ENCODE measurements at regions of chr3 and their contacts with region 1.

Region 1: GRCh38 chr3:190811775-190812480 is 50.6 kb downstream of the GMNC start:
- DNase-seq: peak in 1 of 5 donors; percentile 33
- ATAC-seq: no peak
- H3K4me3 ChIP-seq: no peak overlapping the region
- H3K27ac ChIP-seq: no peak overlapping the region
- H3K4me1 ChIP-seq: peaks cover 0 to 18% (median 1%) of the 10 kb centered on the region in 12 donors
- H3K27me3 ChIP-seq: no peaks in the 10 kb centered on the region
- CTCF ChIP-seq: peak; percentile 24 to 66 (median 50)
- POLR2A ChIP-seq: no peak

Region 2: GRCh38 chr3:190617185-190617584 is 194.7 kb before region 1 on chr3:
- intact Hi-C with region 1: no loop called
- DNase-seq: peak in 2 of 5 donors; percentile 19 to 38
- ATAC-seq: peak in 3 of 4 donors; percentile 39 to 68 (median 42)
- H3K4me3 ChIP-seq: no peak overlapping the region
- H3K27ac ChIP-seq: peak overlapping the region in 1 of 12 donors; percentile 53
- H3K4me1 ChIP-seq: peaks cover 0 to 45% (median 0%) of the 10 kb centered on the region in 12 donors
- H3K27me3 ChIP-seq: no peaks in the 10 kb centered on the region
- CTCF ChIP-seq: no peak
- POLR2A ChIP-seq: no peak

Region 3: GRCh38 chr3:190666821-190667220 is 145.1 kb before region 1 on chr3:
- intact Hi-C with region 1: no loop called
- DNase-seq: no peak
- ATAC-seq: no peak
- H3K4me3 ChIP-seq: no peak overlapping the region
- H3K27ac ChIP-seq: no peak overlapping the region
- H3K4me1 ChIP-seq: no peaks in the 10 kb centered on the region
- H3K27me3 ChIP-seq: no peaks in the 10 kb centered on the region
- CTCF ChIP-seq: no peak
- POLR2A ChIP-seq: no peak

Region 4: GRCh38 chr3:190773948-190774347 is 38.0 kb before region 1 on chr3:
- intact Hi-C with region 1: loop called in 3 of 10 experiments (anchors 1 to 5 kb)
- DNase-seq: peak in 4 of 5 donors; percentile 37 to 74 (median 58)
- ATAC-seq: peak; percentile 89 to 100 (median 98)
- H3K4me3 ChIP-seq: no peak overlapping the region
- H3K27ac ChIP-seq: peak overlapping the region; percentile 38 to 87 (median 74)
- H3K4me1 ChIP-seq: peaks cover 0 to 13% (median 0%) of the 10 kb centered on the region in 12 donors
- H3K27me3 ChIP-seq: no peaks in the 10 kb centered on the region
- CTCF ChIP-seq: no peak
- POLR2A ChIP-seq: no peak

Region 5: GRCh38 chr3:190862209-190863118 is 50.5 kb after region 1 on chr3 and contains the start of gene GMNC:
- intact Hi-C with region 1: loop called in 2 of 10 experiments (anchors 5 kb)
- DNase-seq: peak; percentile 81 to 93 (median 92)
- ATAC-seq: peak; percentile 94 to 98 (median 97)
- H3K4me3 ChIP-seq: peak within 1 kb of the TSS; percentile 53 to 70 (median 63)
- H3K27ac ChIP-seq: peak within 1 kb of the TSS; percentile 64 to 92 (median 84)
- H3K4me1 ChIP-seq: peaks cover 0 to 10% (median 0%) of the 10 kb centered on the region in 12 donors
- H3K27me3 ChIP-seq: peaks cover 0 to 33% (median 0%) of the 10 kb centered on the region in 9 donors
- CTCF ChIP-seq: no peak
- POLR2A ChIP-seq: peak; percentile 33 to 95
- total RNA-seq, gene GMNC: 0.20 to 4.4 (median 1.7) TPM

Region 6: GRCh38 chr3:191051037-191051436 is 239.1 kb after region 1 on chr3:
- intact Hi-C with region 1: loop called in 7 of 10 experiments (anchors 2 to 5 kb)
- DNase-seq: no peak
- ATAC-seq: no peak
- H3K4me3 ChIP-seq: no peak overlapping the region
- H3K27ac ChIP-seq: no peak overlapping the region
- H3K4me1 ChIP-seq: no peaks in the 10 kb centered on the region
- H3K27me3 ChIP-seq: no peaks in the 10 kb centered on the region
- CTCF ChIP-seq: peak; percentile 21 to 59 (median 50)
- POLR2A ChIP-seq: no peak

Measured in heart left ventricle (tissue), 16 donors.